IMR-90 (cell line): ENCODE measurements at regions of chr7 and their contacts with region 1.

Region 1: DNA sequence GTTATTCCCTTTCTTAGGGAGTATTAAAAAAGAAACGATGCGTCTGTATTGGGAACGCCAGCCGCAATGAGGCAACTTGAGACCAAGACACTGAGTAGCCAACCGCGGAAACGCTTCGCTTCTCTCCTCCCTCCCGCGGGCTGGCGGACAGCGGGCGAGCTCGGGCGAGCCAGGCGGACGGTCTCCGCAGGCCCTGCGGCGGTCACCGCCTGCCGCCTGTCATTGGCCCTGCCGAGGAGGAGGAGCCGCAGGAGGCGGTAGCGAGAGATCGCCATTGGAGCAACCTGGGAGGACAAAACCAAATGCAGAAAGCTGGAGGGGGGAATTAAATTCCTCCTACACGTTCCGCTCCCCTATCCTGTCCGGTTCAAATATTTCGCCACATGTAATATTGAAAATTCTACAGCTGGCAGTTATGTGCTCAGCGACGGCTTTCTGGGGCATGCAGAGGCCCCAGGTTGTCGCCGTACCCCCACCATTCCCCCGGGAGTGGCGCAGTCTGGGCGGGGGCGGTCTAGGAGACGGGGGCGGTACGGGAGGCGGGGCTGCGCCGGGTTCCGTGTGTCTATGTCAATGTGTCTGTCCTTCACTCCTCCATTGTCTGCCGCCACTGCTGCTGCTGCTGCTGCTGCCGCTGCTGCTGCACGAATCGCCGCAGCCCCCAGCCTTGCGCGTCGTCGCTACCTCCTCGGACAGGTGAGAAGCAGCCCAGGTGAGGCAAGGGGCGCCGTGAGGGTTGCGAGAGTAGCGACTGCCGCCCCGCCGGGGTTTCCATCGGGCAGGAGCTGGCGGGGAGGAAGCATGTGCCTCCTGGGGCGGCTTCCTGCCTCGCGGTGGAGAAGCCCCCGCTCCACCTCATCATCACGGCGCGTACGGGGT is at the starts of genes ANKMY2 and BZW2:
- DNase-seq: peak; percentile 97
- ATAC-seq: peak; percentile 92
- H3K4me3 ChIP-seq: peak within 1 kb of the TSS; percentile 74
- H3K27ac ChIP-seq: peak within 1 kb of the TSS; percentile 93
- H3K4me1 ChIP-seq: peaks cover 6% of the 10 kb centered on the region
- H3K27me3 ChIP-seq: no peaks in the 10 kb centered on the region
- CTCF ChIP-seq: no peak
- POLR2A ChIP-seq: peak; percentile 98
- RAD21 ChIP-seq: 0 out of 2 replicates have a peak, but pooled peaks have one; percentile 7
- total RNA-seq, gene ANKMY2: 41.9 and 43.6 TPM in 2 replicates
- total RNA-seq, gene BZW2: 58.1 and 65.0 TPM in 2 replicates

Region 2: DNA sequence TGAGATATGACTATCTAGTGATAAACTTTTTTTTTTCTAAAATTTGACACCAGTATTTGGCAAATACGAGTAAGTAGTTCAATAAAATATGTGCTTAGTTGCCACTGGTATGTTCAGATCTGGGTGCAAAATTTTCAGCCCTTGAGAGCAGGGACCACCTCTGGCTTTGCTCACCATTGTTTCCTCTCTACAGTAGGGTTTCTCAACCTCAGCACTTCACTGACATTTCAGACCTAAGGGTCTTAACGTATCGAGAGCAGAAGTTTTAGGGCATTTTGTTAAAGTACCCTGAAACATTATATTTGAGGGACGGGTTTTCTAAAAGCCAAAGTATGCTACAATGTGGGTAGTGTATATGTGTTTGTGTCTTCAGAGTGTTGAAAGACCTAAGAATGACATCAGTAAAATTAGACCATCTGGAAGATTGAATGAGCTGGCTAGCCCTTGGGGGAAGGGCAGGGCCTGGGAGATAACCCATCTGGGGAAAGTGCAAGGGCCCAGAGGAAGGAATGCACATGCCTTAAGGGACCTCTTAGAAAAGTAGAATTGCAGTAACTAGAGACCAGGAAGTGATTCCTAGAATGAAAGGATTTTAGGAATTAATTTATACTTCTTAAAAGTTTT is 11.9 kb after region 1 on chr7:
- CTCF ChIA-PET with region 1: no interaction called
- POLR2A ChIA-PET with region 1: no interaction called
- dilution Hi-C with region 1: no loop called
- in situ Hi-C with region 1: no loop called
- intact Hi-C with region 1: loop called (anchors 1 kb)
- DNase-seq: peak; percentile 94
- ATAC-seq: peak; percentile 94
- H3K4me3 ChIP-seq: no peak overlapping the region
- H3K27ac ChIP-seq: peak overlapping the region; percentile 99
- H3K4me1 ChIP-seq: peaks cover 4% of the 10 kb centered on the region
- H3K27me3 ChIP-seq: no peaks in the 10 kb centered on the region
- CTCF ChIP-seq: peak; percentile 42
- POLR2A ChIP-seq: no peak
- RAD21 ChIP-seq: no peak; the same call in 1 of the 2 replicates

Region 3: DNA sequence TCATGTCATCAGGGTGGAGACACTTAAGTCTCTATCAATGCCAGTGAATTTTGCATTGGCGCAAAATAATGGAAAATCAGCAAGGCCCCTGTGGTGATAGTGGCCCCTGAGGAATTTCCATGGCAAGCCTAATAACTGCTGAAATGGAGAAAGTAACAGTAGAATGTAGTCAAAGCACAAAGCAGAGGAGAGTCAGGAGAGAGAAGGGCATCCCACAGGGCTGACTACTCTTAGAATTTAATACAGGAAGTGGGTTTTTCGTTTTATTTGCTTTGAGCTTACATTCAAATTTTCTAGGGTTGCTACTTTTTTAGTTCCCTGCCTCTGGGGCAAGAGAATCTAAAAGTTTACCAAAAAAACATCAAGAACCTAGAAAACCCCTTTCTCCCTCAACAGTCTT is 39.1 kb after region 1 on chr7:
- CTCF ChIA-PET with region 1: interaction called, 3 read pairs
- POLR2A ChIA-PET with region 1: no interaction called
- dilution Hi-C with region 1: no loop called
- in situ Hi-C with region 1: no loop called
- intact Hi-C with region 1: loop called (anchors 2 kb)
- DNase-seq: no peak
- ATAC-seq: peak; percentile 57
- H3K4me3 ChIP-seq: no peak overlapping the region
- H3K27ac ChIP-seq: peak overlapping the region; percentile 67; the same call in 1 of the 2 replicates
- H3K4me1 ChIP-seq: peaks cover 6% of the 10 kb centered on the region
- H3K27me3 ChIP-seq: no peaks in the 10 kb centered on the region
- CTCF ChIP-seq: no peak
- POLR2A ChIP-seq: no peak
- RAD21 ChIP-seq: no peak

Region 4: DNA sequence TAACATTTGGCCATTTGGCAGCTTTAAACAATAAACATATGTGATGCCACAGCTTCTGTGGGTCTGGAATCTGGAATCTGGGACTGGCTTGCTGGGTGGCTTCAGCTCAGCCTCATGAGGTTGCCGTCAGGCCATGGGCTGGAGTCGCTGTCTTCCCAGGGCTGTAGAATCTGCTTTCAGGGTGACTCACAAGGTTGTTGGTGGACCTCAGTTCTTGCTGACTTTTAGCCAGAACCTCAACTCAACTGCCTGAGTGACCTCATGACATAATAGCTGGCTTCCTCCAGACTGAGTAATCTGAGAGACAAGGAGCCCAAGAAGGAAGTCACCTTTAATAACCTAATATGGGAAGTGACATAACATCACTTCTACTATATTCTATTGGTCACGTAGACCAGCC is 63.1 kb after region 1 on chr7:
- CTCF ChIA-PET with region 1: no interaction called
- POLR2A ChIA-PET with region 1: no interaction called
- dilution Hi-C with region 1: no loop called
- in situ Hi-C with region 1: no loop called
- intact Hi-C with region 1: no loop called
- DNase-seq: peak; percentile 98
- ATAC-seq: peak; percentile 97
- H3K4me3 ChIP-seq: no peak overlapping the region
- H3K27ac ChIP-seq: no peak overlapping the region
- H3K4me1 ChIP-seq: peaks cover 6% of the 10 kb centered on the region; the same call in 1 of the 2 replicates
- H3K27me3 ChIP-seq: no peaks in the 10 kb centered on the region
- CTCF ChIP-seq: no peak
- POLR2A ChIP-seq: no peak
- RAD21 ChIP-seq: no peak

Region 5: DNA sequence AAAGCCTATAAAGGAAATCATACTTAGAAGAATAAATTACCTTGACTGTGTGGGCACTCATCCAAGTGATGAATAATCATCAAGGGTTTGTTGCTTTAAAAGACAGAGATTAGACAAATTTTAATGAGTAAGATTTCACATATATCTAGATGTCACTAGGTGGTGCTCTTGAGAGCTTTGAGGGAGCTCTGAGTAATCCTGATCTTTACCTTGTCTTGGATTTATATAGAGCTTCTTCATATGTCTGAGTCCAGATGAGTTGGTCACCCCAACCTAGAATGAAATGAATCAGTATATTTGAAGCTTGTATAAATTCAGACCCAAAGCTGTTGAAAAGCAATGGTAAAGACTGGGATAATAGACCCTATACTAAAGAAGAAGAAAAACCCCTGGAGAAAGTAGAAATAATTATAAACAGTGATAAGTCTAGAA is 155.3 kb after region 1 on chr7:
- CTCF ChIA-PET with region 1: no interaction called
- POLR2A ChIA-PET with region 1: no interaction called
- dilution Hi-C with region 1: no loop called
- in situ Hi-C with region 1: no loop called
- intact Hi-C with region 1: loop called (anchors 5 kb)
- DNase-seq: peak; percentile 83
- ATAC-seq: peak; percentile 93
- H3K4me3 ChIP-seq: no peak overlapping the region
- H3K27ac ChIP-seq: no peak overlapping the region
- H3K4me1 ChIP-seq: no peaks in the 10 kb centered on the region; the same call in 1 of the 2 replicates
- H3K27me3 ChIP-seq: no peaks in the 10 kb centered on the region; the same call in none of the 2 replicates
- CTCF ChIP-seq: peak; percentile 60
- POLR2A ChIP-seq: no peak
- RAD21 ChIP-seq: peak; percentile 55